Caco-2 (cell line): ENCODE measurements at regions of chr17 and their contacts with region 1.

Region 1: GRCh38 chr17:50883850-50884438 is 17.8 kb upstream of the TOB1 start:
- DNase-seq: peak; percentile 71 to 78
- H3K4me3 ChIP-seq: no peak overlapping the region
- H3K4me3 Mint-ChIP-seq: peak overlapping the region; percentile 44
- H3K27ac Mint-ChIP-seq: peak overlapping the region; percentile 96
- H3K4me1 ChIP-seq: peaks cover 47% of the 10 kb centered on the region
- H3K4me1 Mint-ChIP-seq: peaks cover 40% of the 10 kb centered on the region
- H3K27me3 ChIP-seq: no peaks in the 10 kb centered on the region
- H3K27me3 Mint-ChIP-seq: no peaks in the 10 kb centered on the region
- CTCF ChIP-seq: no peak

Region 2: DNA sequence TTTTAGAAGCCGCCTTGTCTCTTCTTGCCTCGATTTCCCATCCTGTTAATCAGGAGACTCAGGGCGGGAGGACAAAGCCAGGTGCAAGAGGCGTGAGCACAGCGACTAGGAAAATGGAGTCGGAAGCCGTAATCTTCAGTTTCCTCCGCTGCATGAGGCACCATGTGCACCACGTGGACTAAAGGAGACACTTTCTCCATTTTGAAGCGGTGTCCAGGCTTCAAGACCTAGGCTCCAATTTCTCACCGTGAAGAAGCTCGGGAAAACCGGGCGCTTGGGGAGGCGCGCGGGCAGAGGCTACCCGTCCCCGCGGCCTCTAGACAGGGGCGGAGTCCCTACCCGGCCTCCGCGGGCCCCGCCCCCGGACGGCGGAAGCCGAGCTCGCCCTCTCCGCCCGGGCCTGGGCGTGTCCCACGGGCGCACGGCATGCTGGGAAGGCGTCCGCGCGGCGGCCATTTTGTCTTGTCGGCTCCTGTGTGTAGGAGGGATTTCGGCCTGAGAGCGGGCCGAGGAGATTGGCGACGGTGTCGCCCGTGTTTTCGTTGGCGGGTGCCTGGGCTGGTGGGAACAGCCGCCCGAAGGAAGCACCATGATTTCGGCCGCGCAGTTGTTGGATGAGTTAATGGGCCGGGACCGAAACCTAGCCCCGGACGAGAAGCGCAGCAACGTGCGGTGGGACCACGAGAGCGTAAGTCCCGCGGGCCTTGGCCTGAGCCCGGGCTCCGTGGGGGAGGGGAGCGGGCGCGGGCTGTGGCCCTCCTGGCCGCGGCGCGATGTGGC is 164.6 kb before region 1 on chr17 and contains the start of gene LUC7L3:
- CTCF ChIA-PET with region 1: no interaction called
- POLR2A ChIA-PET with region 1: interaction called, 10 read pairs
- intact Hi-C with region 1: no loop called
- DNase-seq: peak; percentile 99 to 100
- H3K4me3 ChIP-seq: peak within 1 kb of the TSS; percentile 88
- H3K4me3 Mint-ChIP-seq: peak within 1 kb of the TSS; percentile 97
- H3K27ac Mint-ChIP-seq: peak within 1 kb of the TSS; percentile 100
- H3K4me1 ChIP-seq: peaks cover 23% of the 10 kb centered on the region
- H3K4me1 Mint-ChIP-seq: peaks cover 18% of the 10 kb centered on the region
- H3K27me3 ChIP-seq: no peaks in the 10 kb centered on the region
- H3K27me3 Mint-ChIP-seq: no peaks in the 10 kb centered on the region
- CTCF ChIP-seq: no peak
- total RNA-seq, gene LUC7L3: 284 and 287 TPM in 2 replicates

Region 3: DNA sequence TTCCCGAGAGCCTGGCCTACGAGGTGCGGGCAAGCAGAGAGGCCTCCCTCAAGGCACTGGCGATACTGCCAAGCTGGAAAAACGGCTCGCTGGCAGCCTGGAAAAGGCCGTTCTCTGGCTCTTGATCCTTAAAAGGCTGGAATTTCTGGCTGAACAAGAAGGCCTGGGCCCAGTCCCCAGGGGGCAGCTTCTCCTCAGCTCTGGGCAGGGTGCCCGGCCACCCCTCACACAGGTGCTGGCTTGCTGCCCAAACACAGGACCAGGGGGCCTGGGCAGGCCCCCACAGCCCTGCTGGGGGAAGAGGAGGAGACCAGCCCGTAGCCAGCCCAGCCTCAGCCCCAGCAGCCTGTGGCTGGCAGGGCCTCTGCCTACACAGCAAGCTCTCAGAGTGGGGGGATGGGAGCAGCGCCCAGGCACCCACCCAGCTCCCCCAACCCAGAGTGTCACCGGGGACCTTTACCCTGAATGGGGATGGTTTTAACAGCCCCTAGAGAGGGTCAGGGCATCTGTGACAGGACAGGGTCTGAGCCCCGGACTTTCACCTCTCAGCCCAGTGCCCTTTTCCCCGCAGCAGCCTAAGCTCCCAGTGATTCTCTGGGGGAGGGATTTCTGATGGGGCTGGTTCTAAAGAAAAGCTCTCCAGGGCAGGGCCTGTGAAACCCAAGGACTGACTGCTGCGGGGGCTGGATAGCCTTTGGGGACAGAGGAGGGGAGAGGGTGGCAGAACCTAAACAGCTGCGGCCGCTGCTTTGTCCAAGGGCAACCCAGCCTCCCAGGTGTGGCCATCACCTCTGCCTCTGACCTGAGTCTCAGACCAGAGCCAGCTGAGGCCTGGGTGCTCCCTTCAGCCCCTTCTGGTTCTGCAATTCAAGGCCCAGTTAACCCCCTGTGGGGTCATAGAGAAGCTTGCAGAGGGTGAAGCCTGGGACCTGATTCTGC is 20.8 kb after region 1 on chr17:
- CTCF ChIA-PET with region 1: interaction called, 19 read pairs
- POLR2A ChIA-PET with region 1: interaction called, 28 read pairs
- intact Hi-C with region 1: loop called (anchors 1 kb)
- DNase-seq: peak; percentile 83 to 86
- H3K4me3 ChIP-seq: peak overlapping the region; percentile 11
- H3K4me3 Mint-ChIP-seq: peak overlapping the region; percentile 51
- H3K27ac Mint-ChIP-seq: peak overlapping the region; percentile 87
- H3K4me1 ChIP-seq: peaks cover 48% of the 10 kb centered on the region
- H3K4me1 Mint-ChIP-seq: peaks cover 46% of the 10 kb centered on the region
- H3K27me3 ChIP-seq: no peaks in the 10 kb centered on the region
- H3K27me3 Mint-ChIP-seq: no peaks in the 10 kb centered on the region
- CTCF ChIP-seq: peak; percentile 1 to 26

Region 4: DNA sequence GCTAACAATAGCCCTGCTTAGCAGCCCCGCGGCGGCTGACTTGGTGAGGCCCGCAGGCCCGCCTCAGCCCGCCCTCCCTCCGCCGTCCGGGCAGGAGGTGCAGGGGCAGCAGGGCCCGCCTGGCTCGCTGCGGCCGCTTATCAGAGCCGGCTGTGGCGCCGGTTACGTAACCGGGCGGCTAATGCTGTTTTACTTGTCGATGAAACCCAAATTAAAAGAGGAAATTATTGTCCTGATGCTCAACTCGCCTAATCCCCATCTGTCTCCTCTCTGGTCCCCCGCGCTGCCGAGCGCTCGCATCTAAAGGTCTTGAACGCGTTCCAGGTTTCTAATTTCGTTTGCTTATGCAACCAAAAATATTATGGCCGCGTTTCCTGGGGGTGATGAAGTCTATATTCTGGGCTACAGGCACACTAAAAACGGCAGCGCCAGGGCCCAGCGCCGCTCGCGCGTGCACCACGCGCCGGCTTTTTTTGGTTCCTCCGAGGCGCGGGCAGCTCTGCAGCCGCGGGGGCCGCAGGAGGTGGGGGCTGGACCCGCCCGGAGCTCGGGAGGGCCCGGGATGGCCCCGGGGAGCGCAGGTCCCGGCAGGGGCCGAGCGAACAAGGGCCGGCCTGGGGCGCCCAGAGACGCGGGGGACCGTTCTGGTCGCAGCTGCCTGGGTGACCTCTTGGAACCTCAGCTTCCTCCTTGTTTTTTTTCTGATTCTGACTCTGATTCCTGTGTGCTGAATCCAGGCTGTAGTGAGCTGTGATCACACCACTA is 47.4 kb after region 1 on chr17:
- CTCF ChIA-PET with region 1: interaction called, 9 read pairs
- POLR2A ChIA-PET with region 1: interaction called, 17 read pairs
- intact Hi-C with region 1: loop called (anchors 2 kb)
- DNase-seq: peak; percentile 92
- H3K4me3 ChIP-seq: peak overlapping the region; percentile 44
- H3K4me3 Mint-ChIP-seq: peak overlapping the region; percentile 78
- H3K27ac Mint-ChIP-seq: peak overlapping the region; percentile 89
- H3K4me1 ChIP-seq: peaks cover 28% of the 10 kb centered on the region
- H3K4me1 Mint-ChIP-seq: peaks cover 29% of the 10 kb centered on the region
- H3K27me3 ChIP-seq: no peaks in the 10 kb centered on the region
- H3K27me3 Mint-ChIP-seq: no peaks in the 10 kb centered on the region
- CTCF ChIP-seq: no peak

Region 5: GRCh38 chr17:50949989-50950881 is 66.3 kb after region 1 on chr17:
- CTCF ChIA-PET with region 1: interaction called, 9 read pairs
- POLR2A ChIA-PET with region 1: interaction called, 18 read pairs
- intact Hi-C with region 1: loop called (anchors 2 kb)
- DNase-seq: peak; percentile 90 to 93
- H3K4me3 ChIP-seq: no peak overlapping the region
- H3K4me3 Mint-ChIP-seq: peak overlapping the region; percentile 32
- H3K27ac Mint-ChIP-seq: peak overlapping the region; percentile 16
- H3K4me1 ChIP-seq: peaks cover 29% of the 10 kb centered on the region
- H3K4me1 Mint-ChIP-seq: peaks cover 31% of the 10 kb centered on the region
- H3K27me3 ChIP-seq: no peaks in the 10 kb centered on the region
- H3K27me3 Mint-ChIP-seq: no peaks in the 10 kb centered on the region
- CTCF ChIP-seq: peak; percentile 99